GM12878 (cell line): ENCODE measurements at regions of chr2 and their contacts with region 1.

Region 1: DNA sequence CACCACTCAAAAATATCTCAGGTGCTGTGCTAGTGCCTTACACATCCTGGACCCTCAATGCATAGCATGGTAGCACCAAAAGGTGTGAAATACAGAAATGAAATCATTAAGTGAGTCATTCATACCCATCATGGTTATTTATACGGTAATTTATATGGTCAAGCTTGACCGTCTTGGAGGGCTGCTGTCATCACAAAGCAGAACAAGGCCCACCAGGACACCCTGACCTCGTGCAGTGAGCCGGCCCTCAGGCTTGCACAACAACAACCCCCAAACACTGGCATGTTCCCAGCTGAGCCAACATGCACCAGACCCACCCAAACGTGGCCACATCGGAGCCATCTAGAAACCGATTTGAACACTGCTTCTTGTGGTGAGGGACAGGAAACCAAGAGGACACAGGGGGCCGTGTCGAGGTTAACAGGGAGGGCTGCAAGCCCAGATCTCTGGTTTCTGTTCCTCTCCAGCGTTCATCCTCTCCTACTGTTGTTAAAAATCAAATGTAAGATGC is 378.5 kb upstream of the ID2 start:
- DNase-seq: peak; percentile 95
- ATAC-seq: peak; percentile 77
- H3K4me3 ChIP-seq: no peak overlapping the region
- H3K27ac ChIP-seq: peak overlapping the region; percentile 81
- H3K4me1 ChIP-seq: peaks cover 74% of the 10 kb centered on the region
- H3K27me3 ChIP-seq: no peaks in the 10 kb centered on the region
- CTCF ChIP-seq: peak in 1 of 3 experiments; percentile 4; a peak in 1 of 6 replicates
- EP300 ChIP-seq: peak; percentile 92 to 94
- POLR2A ChIP-seq: peak; percentile 27; the same call in 1 of the 2 replicates
- RAD21 ChIP-seq: peak; percentile 35; the same call in 1 of the 2 replicates

Region 2: GRCh38 chr2:7773362-7774360 is 529.7 kb before region 1 on chr2:
- CTCF ChIA-PET with region 1: no interaction called
- POLR2A ChIA-PET with region 1: no interaction called
- RAD21 ChIA-PET with region 1: no interaction called
- SMC1A ChIA-PET with region 1: interaction called, 5 read pairs
- in situ Hi-C with region 1: no loop called
- intact Hi-C with region 1: loop called (anchors 2 kb)
- DNase-seq: peak; percentile 91
- ATAC-seq: peak; percentile 86
- H3K4me3 ChIP-seq: peak overlapping the region; percentile 45
- H3K27ac ChIP-seq: peak overlapping the region; percentile 48
- H3K4me1 ChIP-seq: peaks cover 19% of the 10 kb centered on the region
- H3K27me3 ChIP-seq: no peaks in the 10 kb centered on the region
- CTCF ChIP-seq: no peak
- EP300 ChIP-seq: peak; percentile 98 to 99
- POLR2A ChIP-seq: no peak
- RAD21 ChIP-seq: peak; percentile 21; the same call in 1 of the 2 replicates

Region 3: GRCh38 chr2:8049851-8050571 is 253.4 kb before region 1 on chr2:
- CTCF ChIA-PET with region 1: no interaction called
- POLR2A ChIA-PET with region 1: no interaction called
- RAD21 ChIA-PET with region 1: interaction called, 8 read pairs
- SMC1A ChIA-PET with region 1: interaction called, 4 read pairs
- in situ Hi-C with region 1: no loop called
- intact Hi-C with region 1: loop called (anchors 1 kb)
- DNase-seq: peak; percentile 79
- ATAC-seq: peak; percentile 98
- H3K4me3 ChIP-seq: no peak overlapping the region
- H3K27ac ChIP-seq: peak overlapping the region; percentile 59
- H3K4me1 ChIP-seq: peaks cover 21% of the 10 kb centered on the region
- H3K27me3 ChIP-seq: no peaks in the 10 kb centered on the region
- CTCF ChIP-seq: no peak
- EP300 ChIP-seq: peak; percentile 65 to 69; a peak in 3 of 4 replicates
- POLR2A ChIP-seq: no peak
- RAD21 ChIP-seq: no peak

Region 4: DNA sequence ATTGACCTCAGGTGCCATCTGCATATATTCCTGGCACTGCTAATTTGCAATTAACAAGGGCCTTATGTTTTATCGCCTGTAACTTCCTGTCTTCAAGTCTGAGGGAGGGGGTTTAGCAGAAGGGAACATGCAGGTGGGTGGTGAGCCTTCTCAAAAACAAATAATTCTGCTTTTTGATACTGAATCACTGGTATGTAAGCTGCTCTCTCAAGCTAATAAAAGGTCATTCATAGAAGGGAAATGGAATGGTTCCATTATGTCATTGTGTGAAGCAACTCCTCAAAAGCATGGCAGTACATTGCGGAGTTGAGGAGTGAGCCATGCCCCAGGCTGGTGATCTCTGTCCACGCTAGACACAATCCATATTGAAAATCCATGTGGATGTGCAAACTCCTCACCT is 36.3 kb before region 1 on chr2:
- CTCF ChIA-PET with region 1: no interaction called
- POLR2A ChIA-PET with region 1: no interaction called
- RAD21 ChIA-PET with region 1: no interaction called
- SMC1A ChIA-PET with region 1: no interaction called
- in situ Hi-C with region 1: no loop called
- intact Hi-C with region 1: no loop called
- DNase-seq: no peak
- ATAC-seq: no peak
- H3K4me3 ChIP-seq: no peak overlapping the region
- H3K27ac ChIP-seq: no peak overlapping the region
- H3K4me1 ChIP-seq: no peaks in the 10 kb centered on the region
- H3K27me3 ChIP-seq: no peaks in the 10 kb centered on the region
- CTCF ChIP-seq: no peak
- EP300 ChIP-seq: no peak
- POLR2A ChIP-seq: no peak
- RAD21 ChIP-seq: no peak

Region 5: DNA sequence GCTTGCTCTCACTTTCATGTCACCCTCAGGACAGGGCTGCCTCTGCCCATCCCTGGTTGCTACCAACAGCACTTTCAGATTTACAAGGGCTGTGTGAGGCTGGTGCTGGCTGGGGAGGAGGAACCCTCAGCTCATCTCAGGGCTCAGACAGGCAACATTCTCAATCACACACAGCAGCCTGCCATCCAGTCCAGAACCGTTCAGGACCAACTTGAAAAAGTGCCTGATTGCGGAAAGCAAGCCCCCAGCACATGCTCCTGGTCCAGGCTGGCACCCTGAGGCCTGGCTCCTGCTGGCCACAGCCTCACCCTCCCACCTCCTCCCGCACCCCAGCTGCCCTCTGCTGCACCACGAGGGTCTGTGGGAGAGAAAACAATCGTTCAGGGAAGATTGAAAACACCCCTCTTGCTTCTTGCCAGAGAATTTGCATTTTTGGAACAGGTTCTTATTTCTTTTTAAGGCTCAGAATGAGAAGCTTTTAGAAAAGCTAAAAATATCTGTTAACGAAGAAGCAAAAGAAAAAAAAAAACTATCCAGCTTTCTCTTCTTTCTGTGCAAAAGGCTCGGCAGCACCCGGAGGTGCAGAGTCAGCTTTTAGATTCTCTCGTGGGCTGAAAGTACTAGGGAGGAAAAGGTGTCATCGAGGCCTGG is 25.3 kb before region 1 on chr2:
- CTCF ChIA-PET with region 1: interaction called, 3 read pairs
- POLR2A ChIA-PET with region 1: no interaction called
- RAD21 ChIA-PET with region 1: interaction called, 21 read pairs
- SMC1A ChIA-PET with region 1: interaction called, 32 read pairs
- in situ Hi-C with region 1: no loop called
- intact Hi-C with region 1: loop called (anchors 1 kb)
- DNase-seq: peak; percentile 56
- ATAC-seq: peak; percentile 95
- H3K4me3 ChIP-seq: peak overlapping the region; percentile 40; the same call in 1 of the 2 replicates
- H3K27ac ChIP-seq: peak overlapping the region; percentile 56
- H3K4me1 ChIP-seq: peaks cover 17% of the 10 kb centered on the region
- H3K27me3 ChIP-seq: no peaks in the 10 kb centered on the region
- CTCF ChIP-seq: no peak
- EP300 ChIP-seq: peak in 1 of 2 experiments; percentile 58; a peak in 1 of 4 replicates
- POLR2A ChIP-seq: no peak
- RAD21 ChIP-seq: no peak

Region 6: GRCh38 chr2:8378016-8378810 is 74.8 kb after region 1 on chr2:
- CTCF ChIA-PET with region 1: no interaction called
- POLR2A ChIA-PET with region 1: interaction called, 5 read pairs
- RAD21 ChIA-PET with region 1: interaction called, 4 read pairs
- SMC1A ChIA-PET with region 1: interaction called, 3 read pairs
- in situ Hi-C with region 1: no loop called
- intact Hi-C with region 1: loop called (anchors 5 kb)
- DNase-seq: peak; percentile 63
- ATAC-seq: peak; percentile 88
- H3K4me3 ChIP-seq: no peak overlapping the region
- H3K27ac ChIP-seq: no peak overlapping the region
- H3K4me1 ChIP-seq: peaks cover 33% of the 10 kb centered on the region
- H3K27me3 ChIP-seq: no peaks in the 10 kb centered on the region
- CTCF ChIP-seq: no peak
- EP300 ChIP-seq: peak in 1 of 2 experiments; percentile 42; a peak in 2 of 4 replicates
- POLR2A ChIP-seq: no peak
- RAD21 ChIP-seq: 0 out of 2 replicates have a peak, but pooled peaks have one; percentile 4

Region 7: DNA sequence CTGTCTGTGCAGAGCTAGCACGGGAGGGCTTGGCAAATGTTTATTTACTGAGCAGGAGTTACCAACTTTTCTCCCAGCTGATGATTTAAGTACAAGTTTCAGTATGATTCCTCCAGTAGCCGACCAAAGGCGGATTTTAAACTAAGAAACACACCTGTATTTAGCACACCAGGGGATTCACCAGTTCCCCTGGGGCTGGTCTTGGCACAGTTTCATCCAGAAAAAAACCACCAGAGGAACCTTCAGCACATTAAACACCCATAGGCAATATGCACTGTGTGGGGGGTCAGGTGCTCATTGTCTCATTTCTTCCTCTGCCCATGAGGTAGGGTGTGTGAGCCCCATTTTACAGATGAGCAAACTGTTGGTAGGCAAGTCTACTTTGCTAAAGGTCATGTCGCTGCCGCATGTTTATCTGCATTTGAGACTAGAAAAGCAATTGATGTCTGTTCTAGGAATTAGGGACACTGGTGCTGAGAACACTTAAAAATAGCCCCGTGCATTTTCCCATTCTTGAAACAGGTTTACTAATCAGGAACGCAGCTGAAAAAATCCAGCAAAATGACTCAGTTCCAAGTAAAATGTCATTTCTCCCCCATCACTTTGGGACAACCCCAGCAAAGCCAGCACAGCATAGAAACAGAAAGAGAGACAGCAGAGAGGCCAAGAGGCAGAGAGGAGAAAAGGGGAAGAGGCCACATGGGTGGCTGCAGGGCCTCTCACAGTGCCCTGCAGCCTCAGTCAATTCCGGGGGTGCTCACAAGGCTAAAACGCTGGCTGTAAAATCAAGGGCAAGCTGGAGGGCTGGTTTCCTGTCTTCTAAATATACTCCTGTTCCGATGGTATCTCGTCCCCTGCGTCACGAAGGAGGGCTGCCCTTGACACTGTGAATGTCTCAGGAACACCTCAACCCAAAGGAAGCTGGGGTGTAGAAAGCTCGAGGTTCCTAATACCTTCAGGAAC is 211.7 kb after region 1 on chr2:
- CTCF ChIA-PET with region 1: no interaction called
- POLR2A ChIA-PET with region 1: no interaction called
- RAD21 ChIA-PET with region 1: interaction called, 4 read pairs
- SMC1A ChIA-PET with region 1: interaction called, 4 read pairs
- in situ Hi-C with region 1: no loop called
- intact Hi-C with region 1: loop called (anchors 2 kb)
- DNase-seq: peak; percentile 99
- ATAC-seq: peak; percentile 82
- H3K4me3 ChIP-seq: peak overlapping the region; percentile 51; the same call in 1 of the 2 replicates
- H3K27ac ChIP-seq: peak overlapping the region; percentile 93
- H3K4me1 ChIP-seq: peaks cover 46% of the 10 kb centered on the region
- H3K27me3 ChIP-seq: no peaks in the 10 kb centered on the region
- CTCF ChIP-seq: no peak
- EP300 ChIP-seq: peak; percentile 76 to 95; a peak in 3 of 4 replicates
- POLR2A ChIP-seq: no peak
- RAD21 ChIP-seq: peak; percentile 36; the same call in 1 of the 2 replicates

Region 8: DNA sequence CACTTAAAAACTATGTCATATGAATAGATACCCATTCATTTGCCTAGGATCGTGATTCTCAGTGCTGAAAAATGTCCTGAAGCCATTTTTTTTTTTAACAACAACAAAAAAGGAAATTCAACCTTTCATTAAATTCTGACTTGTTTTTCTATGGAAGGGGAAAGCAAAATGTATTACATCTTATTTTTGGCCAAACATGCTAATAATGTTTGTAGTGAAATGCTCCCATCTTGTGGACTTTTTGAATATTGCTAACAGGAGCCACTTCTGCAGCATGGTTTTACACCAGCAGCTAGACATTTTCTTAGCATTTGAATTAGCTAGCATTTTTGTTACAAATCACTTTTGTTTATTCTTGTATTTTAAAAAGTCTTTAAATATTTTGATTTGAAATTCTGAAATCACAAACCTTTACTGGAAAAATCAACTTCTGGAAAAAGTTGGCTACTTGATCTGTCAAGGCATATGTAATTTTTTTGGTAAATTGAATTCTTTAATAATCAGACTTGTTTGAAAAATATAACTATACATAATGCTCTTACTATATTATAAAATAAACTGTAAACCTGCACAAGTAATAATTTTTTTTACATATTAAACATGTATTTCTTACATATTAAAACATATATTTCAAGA is 458.3 kb after region 1 on chr2:
- CTCF ChIA-PET with region 1: no interaction called
- POLR2A ChIA-PET with region 1: no interaction called
- RAD21 ChIA-PET with region 1: no interaction called
- SMC1A ChIA-PET with region 1: no interaction called
- in situ Hi-C with region 1: no loop called
- intact Hi-C with region 1: loop called (anchors 5 kb)
- DNase-seq: peak; percentile 35
- ATAC-seq: peak; percentile 65
- H3K4me3 ChIP-seq: no peak overlapping the region
- H3K27ac ChIP-seq: no peak overlapping the region
- H3K4me1 ChIP-seq: no peaks in the 10 kb centered on the region
- H3K27me3 ChIP-seq: no peaks in the 10 kb centered on the region
- CTCF ChIP-seq: peak; percentile 49 to 65 (median 56)
- EP300 ChIP-seq: no peak
- POLR2A ChIP-seq: no peak
- RAD21 ChIP-seq: peak; percentile 67